ENCODE measurements at regions of chr2 and their contacts with region 1.

Region 1: GRCh38 chr2:73071360-73072133 is at the start of gene SFXN5:
- DNase-seq: peak; percentile 96
- H3K4me3 Mint-ChIP-seq: peak within 1 kb of the TSS; percentile 87
- H3K27ac Mint-ChIP-seq: peak within 1 kb of the TSS; percentile 90
- H3K4me1 Mint-ChIP-seq: peaks cover 28% of the 10 kb centered on the region
- H3K27me3 Mint-ChIP-seq: peaks cover 20% of the 10 kb centered on the region
- total RNA-seq, gene SFXN5: 9.5 and 12.0 TPM in 2 replicates

Region 2: DNA sequence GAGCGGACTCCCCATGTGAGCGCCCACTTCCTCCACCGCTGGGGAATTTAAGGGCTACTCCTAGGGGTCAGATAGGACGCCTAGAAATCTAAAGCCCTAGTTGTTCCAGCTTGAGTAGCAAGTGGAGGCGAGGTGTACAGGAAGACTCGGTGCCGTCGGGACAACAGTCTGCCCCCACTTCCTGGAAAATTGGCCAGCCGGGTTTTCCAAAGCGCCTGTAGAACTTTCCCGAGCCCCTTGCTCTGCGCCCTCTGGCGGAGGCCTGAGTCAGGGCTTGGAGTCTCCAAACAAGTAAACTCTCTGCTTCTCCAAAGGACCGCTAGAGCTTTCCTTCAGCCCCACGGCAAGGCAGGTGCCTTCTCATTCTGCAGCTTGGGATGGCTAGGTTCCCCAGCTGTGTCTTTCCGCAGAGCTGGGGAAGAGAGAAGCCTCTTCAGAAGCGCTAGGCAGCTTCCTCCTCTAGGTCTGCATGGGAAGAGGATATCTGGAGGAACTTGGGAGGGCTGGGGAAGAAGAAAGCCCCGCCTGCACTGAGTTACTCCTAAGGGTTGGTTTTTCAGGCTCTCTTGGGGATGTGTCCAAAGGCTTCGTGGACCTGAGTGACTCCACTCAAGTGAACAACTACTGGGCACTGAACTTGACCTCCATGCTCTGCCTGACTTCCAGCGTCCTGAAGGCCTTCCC is 183.7 kb before region 1 on chr2:
- intact Hi-C with region 1: loop called (anchors 2 kb)
- DNase-seq: peak; percentile 32
- H3K4me3 Mint-ChIP-seq: peak overlapping the region; percentile 81
- H3K27ac Mint-ChIP-seq: no peak overlapping the region
- H3K4me1 Mint-ChIP-seq: no peaks in the 10 kb centered on the region
- H3K27me3 Mint-ChIP-seq: peaks cover 44% of the 10 kb centered on the region

Region 3: GRCh38 chr2:73085691-73086360 is 14.3 kb after region 1 on chr2:
- intact Hi-C with region 1: loop called (anchors 1 kb)
- DNase-seq: peak; percentile 69
- H3K4me3 Mint-ChIP-seq: no peak overlapping the region
- H3K27ac Mint-ChIP-seq: no peak overlapping the region
- H3K4me1 Mint-ChIP-seq: no peaks in the 10 kb centered on the region
- H3K27me3 Mint-ChIP-seq: no peaks in the 10 kb centered on the region

Region 4: GRCh38 chr2:73163483-73164367 is 92.2 kb after region 1 on chr2:
- intact Hi-C with region 1: loop called (anchors 5 kb)
- DNase-seq: peak; percentile 37
- H3K4me3 Mint-ChIP-seq: no peak overlapping the region
- H3K27ac Mint-ChIP-seq: no peak overlapping the region
- H3K4me1 Mint-ChIP-seq: no peaks in the 10 kb centered on the region
- H3K27me3 Mint-ChIP-seq: peaks cover 9% of the 10 kb centered on the region

Region 5: DNA sequence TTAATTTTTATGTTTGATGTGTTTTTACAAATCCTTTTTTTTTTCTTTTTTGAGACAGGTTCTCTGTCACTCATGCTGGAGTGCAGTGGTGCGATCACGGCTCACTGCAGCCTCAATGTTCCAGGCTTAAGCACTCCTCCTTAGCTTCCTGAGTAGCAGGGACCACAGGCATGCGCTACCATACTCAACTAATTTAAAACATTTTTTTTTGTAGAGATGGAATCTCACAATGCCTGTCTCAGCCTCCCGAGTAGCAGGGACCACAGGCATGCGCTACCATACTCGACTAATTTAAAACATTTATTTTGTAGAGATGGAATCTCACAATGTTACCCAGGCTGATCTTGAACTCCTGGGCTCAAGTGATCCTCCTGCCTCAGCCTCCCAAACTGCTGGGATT is 134.1 kb after region 1 on chr2:
- intact Hi-C with region 1: loop called (anchors 2 kb)
- DNase-seq: no peak
- H3K4me3 Mint-ChIP-seq: no peak overlapping the region
- H3K27ac Mint-ChIP-seq: no peak overlapping the region
- H3K4me1 Mint-ChIP-seq: no peaks in the 10 kb centered on the region
- H3K27me3 Mint-ChIP-seq: peaks cover 40% of the 10 kb centered on the region

Region 6: GRCh38 chr2:73233154-73233931 is 161.8 kb after region 1 on chr2 and contains the start of gene PRADC1:
- intact Hi-C with region 1: loop called (anchors 1 kb)
- DNase-seq: peak; percentile 96
- H3K4me3 Mint-ChIP-seq: peak within 1 kb of the TSS; percentile 95
- H3K27ac Mint-ChIP-seq: peak within 1 kb of the TSS; percentile 96
- H3K4me1 Mint-ChIP-seq: peaks cover 28% of the 10 kb centered on the region
- H3K27me3 Mint-ChIP-seq: no peaks in the 10 kb centered on the region
- total RNA-seq, gene PRADC1: 16.6 and 18.6 TPM in 2 replicates

Region 7: GRCh38 chr2:73385595-73386341 is 314.2 kb after region 1 on chr2 and contains the start of gene ALMS1:
- intact Hi-C with region 1: loop called (anchors 2 kb)
- DNase-seq: peak; percentile 88
- H3K4me3 Mint-ChIP-seq: peak within 1 kb of the TSS; percentile 92
- H3K27ac Mint-ChIP-seq: peak within 1 kb of the TSS; percentile 90
- H3K4me1 Mint-ChIP-seq: peaks cover 37% of the 10 kb centered on the region
- H3K27me3 Mint-ChIP-seq: no peaks in the 10 kb centered on the region
- total RNA-seq, gene ALMS1: 18.2 and 19.4 TPM in 2 replicates

Measured in activated T-helper 1 cell treated with anti-CD3 and anti-CD28 coated beads, Interleukin-12 subunit alpha, Interleukin-12 subunit beta, Interleukin-2, Interleukin-4 antibody, amounts not matched to agents 30 ng/mL and 10 ng/mL and 1 ng/mL, durations not matched to agents 14 hours and 24 hours and 36 hours (primary cell).